ENCODE measurements at regions of chr5 and their contacts with region 1.

Region 1: DNA sequence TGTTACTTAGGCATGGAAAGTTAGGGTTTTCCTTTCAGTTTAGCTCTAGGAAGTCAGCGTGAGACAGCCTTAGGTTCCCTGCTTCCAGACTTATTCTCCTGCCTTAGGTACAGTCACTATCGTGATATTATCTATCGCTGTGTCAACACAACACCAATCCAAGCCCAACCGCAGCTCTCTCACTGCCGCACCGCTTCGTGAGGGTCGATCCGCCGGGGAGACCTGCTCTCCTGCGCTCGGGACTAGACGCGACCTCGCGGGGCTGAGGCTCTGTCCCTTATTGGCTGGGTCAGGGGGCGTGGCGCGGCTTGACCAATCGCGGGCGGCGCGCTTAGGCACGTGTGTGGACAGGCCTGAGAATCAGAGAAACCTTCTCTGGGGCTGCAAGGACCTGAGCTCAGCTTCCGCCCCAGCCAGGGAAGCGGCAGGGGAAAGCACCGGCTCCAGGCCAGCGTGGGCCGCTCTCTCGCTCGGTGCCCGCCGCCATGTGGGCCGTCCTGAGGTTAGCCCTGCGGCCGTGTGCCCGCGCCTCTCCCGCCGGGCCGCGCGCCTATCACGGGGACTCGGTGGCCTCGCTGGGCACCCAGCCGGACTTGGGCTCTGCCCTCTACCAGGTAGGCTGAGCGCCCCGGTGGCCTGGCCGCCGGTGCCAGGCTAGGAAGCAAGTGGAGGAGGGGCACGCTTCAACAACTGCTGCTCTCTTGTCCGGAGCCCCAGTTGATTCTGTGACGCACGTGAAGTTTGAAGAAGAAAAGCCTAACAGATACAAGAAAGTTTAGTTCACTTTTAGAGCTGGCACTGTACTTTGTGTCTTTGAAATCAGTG is at the start of gene MCCC2:
- DNase-seq: peak; percentile 99
- H3K4me3 Mint-ChIP-seq: peak within 1 kb of the TSS; percentile 91
- H3K27ac Mint-ChIP-seq: peak within 1 kb of the TSS; percentile 94
- H3K4me1 Mint-ChIP-seq: peaks cover 36% of the 10 kb centered on the region
- H3K27me3 Mint-ChIP-seq: no peaks in the 10 kb centered on the region

Region 2: DNA sequence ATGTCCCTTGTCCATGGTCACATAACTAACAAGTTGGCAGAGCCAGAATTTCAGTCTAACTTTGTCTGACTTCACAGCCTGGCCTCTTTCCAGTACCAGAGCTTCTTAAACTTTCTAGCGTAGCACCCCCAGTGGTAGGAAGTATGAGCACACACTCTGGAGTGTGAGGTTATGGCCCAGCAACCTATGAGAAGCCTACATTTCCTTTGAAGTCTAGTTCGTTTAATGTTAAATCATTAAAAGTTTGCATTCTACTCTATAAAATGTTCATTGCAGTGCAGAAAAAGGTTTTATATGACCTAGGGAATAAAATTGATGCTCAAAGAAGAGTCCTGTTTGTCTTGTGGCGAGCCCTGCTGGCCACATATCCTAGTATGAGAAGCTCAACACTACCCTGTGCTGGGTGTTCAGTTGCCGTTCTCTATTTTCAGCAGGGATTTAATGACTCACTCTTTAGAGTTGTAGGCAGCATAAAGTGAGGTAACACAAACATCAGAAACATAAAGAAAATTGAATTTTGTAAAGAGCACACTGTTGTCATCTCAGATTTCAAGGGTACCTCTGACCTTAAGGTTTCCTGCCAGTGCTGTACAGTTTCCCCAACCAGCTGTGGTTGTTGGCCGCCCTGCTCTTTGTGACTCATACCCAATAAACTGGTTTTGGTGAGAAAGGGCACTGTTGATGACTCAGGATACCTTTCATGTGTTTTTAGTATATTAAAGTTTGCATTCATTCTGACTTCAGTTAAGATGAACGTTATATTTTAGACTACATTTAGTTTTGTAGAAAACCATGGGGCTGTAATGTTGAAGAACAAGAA is 14.3 kb after region 1 on chr5:
- CTCF ChIA-PET with region 1: interaction called, 42 read pairs
- DNase-seq: peak; percentile 73
- H3K4me3 Mint-ChIP-seq: no peak overlapping the region
- H3K27ac Mint-ChIP-seq: peak overlapping the region; percentile 92
- H3K4me1 Mint-ChIP-seq: peaks cover 32% of the 10 kb centered on the region
- H3K27me3 Mint-ChIP-seq: no peaks in the 10 kb centered on the region

Region 3: DNA sequence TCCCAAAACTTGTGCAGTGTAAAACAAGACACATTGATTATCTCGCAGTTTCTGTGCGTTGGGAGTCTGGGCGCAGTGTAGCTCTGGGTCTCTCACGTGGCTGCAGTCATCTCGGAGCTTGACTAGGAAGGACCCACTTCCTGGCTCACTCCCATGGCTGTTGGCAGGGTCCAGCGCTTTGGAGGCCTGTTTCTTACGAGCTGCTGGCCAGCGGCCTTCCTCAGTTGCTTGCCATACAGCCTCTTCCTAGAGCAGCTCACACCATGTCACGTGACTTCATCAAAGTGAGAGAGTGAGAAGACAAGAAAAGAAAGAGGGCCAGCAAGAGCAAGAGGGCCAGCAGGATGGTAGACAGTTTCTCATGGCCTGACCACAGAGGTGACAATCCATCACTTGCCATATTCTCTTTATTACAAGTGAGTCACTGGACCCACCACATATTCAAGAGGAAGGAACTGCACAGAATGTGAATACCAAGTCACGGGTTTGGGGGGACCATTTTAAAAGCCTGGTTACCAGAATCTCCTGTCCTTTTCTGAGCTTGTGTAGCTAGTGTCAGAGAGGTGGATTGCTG is 36.2 kb after region 1 on chr5:
- CTCF ChIA-PET with region 1: no interaction called
- DNase-seq: no peak
- H3K4me3 Mint-ChIP-seq: no peak overlapping the region
- H3K27ac Mint-ChIP-seq: no peak overlapping the region
- H3K4me1 Mint-ChIP-seq: peaks cover 2% of the 10 kb centered on the region
- H3K27me3 Mint-ChIP-seq: no peaks in the 10 kb centered on the region

Region 4: GRCh38 chr5:71810023-71810422 is 222.9 kb after region 1 on chr5:
- CTCF ChIA-PET with region 1: no interaction called
- DNase-seq: no peak
- H3K4me3 Mint-ChIP-seq: no peak overlapping the region
- H3K27ac Mint-ChIP-seq: no peak overlapping the region
- H3K4me1 Mint-ChIP-seq: no peaks in the 10 kb centered on the region
- H3K27me3 Mint-ChIP-seq: peaks cover 12% of the 10 kb centered on the region